ENCODE measurements at regions of chr20 and their contacts with region 1.

Region 1: GRCh38 chr20:32031007-32031958 is 20.8 kb upstream of the HCK start:
- DNase-seq: peak; percentile 67
- H3K4me3 ChIP-seq: no peak overlapping the region
- H3K27ac ChIP-seq: no peak overlapping the region
- H3K4me1 ChIP-seq: no peaks in the 10 kb centered on the region
- H3K27me3 ChIP-seq: peaks cover 3 to 12% of the 10 kb centered on the region in 2 experiments
- CTCF ChIP-seq: peak; percentile 88 to 89
- POLR2A ChIP-seq: no peak

Region 2: DNA sequence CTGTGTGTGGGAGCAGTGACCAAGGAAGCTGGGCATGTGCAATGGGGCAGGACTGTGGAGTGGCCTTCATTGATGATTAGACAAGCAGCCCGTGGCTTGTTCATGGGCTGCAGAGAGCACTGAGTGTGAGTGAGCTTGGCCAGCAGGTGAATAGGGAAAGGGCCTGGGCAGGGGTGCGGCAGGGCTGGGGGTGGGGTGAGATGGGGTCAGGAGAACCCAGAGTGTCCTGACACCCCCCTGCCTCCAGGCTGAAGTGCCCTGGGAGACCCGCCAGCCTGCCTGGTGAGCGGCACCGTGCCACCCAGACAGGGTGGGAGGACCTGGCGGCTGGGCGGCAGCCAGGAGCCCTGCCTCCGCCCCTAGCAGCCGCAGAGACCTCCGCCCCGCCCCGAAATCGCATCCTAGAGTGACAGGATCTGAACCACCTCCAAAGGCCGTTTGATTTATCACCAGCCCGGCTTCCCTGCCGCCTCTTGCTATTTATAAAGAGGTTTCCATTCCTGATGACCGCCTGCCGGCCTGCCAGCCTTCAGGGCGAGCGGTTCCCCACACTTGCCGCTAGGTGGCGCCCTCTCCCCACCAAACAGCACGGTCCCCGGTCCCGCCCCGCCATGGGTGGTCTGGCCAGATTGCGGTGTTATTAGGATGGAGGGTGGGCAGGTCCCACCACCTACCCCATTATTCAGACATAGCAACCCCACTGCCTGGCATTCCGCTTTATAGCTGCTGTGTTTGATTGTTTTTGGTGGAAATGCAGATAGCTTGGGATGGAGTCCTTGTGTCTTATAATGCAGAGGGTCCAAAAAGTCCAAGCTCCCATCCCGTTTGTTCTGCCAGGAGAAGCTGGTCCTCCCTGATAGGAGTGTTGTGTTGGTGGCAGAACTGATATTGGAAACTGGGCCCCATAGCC is 208.6 kb before region 1 on chr20:
- CTCF ChIA-PET with region 1: interaction called, 91 read pairs
- POLR2A ChIA-PET with region 1: no interaction called
- dilution Hi-C with region 1: no loop called
- intact Hi-C with region 1: loop called (anchors 1 kb)
- DNase-seq: peak; percentile 62
- H3K4me3 ChIP-seq: no peak overlapping the region
- H3K27ac ChIP-seq: peak overlapping the region; percentile 26
- H3K4me1 ChIP-seq: peaks cover 22% of the 10 kb centered on the region
- H3K27me3 ChIP-seq: no peaks in the 10 kb centered on the region
- CTCF ChIP-seq: peak; percentile 96 to 97
- POLR2A ChIP-seq: no peak

Region 3: DNA sequence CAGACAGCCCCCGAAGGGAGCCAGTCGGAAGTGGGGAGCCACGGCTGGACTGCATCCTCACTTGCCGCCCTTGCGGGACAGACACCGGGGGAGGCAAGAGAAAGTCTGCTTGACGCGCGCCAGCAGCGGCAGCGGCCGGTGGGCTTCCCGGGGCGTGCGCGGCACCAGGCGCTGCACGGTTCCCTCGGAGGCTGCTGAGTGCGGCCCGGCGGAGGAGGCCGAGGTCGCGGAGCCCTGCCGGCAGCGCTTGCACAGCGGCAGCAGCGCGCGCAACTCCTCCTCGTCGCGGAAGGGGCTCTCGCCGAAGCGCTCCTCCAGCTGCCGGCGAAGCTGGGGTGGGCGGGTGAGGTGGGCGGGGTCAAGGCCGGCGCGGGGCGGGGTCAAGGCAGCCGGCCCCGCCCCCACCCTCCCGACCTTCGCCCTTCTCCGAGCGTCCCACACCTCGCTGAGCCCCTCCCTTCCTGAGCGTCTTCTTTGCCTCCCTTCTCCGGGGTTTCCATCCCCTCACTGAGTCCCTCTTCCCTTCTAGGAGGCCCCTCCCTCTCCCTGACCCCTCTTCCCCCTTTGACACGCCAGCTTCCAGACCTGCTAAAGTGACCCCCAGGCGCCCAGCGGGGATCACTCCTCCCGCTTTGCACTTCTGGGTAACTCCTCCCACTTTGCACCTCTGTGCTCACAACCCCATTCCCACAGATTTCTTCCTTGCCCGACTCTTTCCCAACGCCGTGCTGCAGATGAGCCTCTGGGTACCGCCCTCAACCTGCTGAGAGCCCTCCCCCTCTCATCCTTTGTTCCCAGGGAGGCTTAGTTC is 169.7 kb before region 1 on chr20:
- CTCF ChIA-PET with region 1: interaction called, 243 read pairs
- POLR2A ChIA-PET with region 1: no interaction called
- dilution Hi-C with region 1: no loop called
- intact Hi-C with region 1: no loop called
- DNase-seq: peak; percentile 56
- H3K4me3 ChIP-seq: peak overlapping the region in 2 of 3 experiments; percentile 32 to 37
- H3K27ac ChIP-seq: no peak overlapping the region
- H3K4me1 ChIP-seq: no peaks in the 10 kb centered on the region
- H3K27me3 ChIP-seq: peaks cover 21 to 26% of the 10 kb centered on the region in 2 experiments
- CTCF ChIP-seq: no peak
- POLR2A ChIP-seq: no peak

Region 4: DNA sequence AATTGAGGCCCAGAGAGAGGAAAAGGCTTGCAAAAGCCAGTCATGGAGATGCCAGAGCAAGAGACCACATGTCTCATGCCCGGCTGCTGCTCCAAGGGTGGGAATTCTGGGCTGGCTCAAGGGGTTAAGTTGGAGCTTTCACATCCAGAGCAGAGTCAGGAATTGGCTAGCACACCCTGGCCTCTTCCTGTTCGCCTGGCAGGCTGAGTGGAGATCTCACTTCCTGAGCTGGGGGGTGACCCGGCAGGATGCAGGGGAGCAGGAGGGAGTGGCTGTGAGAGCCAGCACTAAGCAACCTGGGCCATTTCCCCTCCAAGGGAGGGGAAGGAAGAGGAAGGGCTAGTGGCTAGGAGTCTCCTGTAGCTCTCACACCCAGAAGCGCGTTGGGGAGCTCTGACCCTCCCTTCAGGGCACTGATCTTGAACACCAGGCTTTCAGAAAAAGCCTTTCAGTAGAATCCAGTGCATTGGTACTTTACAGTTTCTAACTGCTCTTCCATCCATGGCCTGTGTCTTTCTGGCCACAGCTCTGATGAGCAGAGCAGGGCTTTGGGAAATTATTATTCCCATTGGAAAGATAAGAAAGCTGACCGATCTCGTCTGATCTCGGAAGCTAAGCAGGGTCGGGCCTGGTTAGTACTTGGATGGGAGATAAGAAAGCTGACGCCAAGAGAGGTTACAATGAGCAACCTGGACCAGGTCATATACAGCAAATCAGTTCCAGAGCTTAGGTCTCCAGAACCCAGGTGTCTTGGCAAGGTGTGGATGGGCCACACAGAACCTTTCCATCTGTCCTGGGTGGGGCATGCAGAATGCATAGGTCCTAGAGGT is 23.3 kb before region 1 on chr20:
- CTCF ChIA-PET with region 1: interaction called, 10 read pairs
- POLR2A ChIA-PET with region 1: interaction called, 4 read pairs
- dilution Hi-C with region 1: no loop called
- intact Hi-C with region 1: loop called (anchors 1 kb)
- DNase-seq: peak; percentile 80
- H3K4me3 ChIP-seq: peak overlapping the region in 1 of 3 experiments; percentile 4
- H3K27ac ChIP-seq: peak overlapping the region; percentile 62
- H3K4me1 ChIP-seq: peaks cover 39% of the 10 kb centered on the region
- H3K27me3 ChIP-seq: no peaks in the 10 kb centered on the region
- CTCF ChIP-seq: no peak
- POLR2A ChIP-seq: peak; percentile 88

Region 5: GRCh38 chr20:32091888-32092346 is 60.6 kb after region 1 on chr20:
- CTCF ChIA-PET with region 1: interaction called, 19 read pairs
- POLR2A ChIA-PET with region 1: no interaction called
- dilution Hi-C with region 1: no loop called
- intact Hi-C with region 1: loop called (anchors 1 kb)
- DNase-seq: peak; percentile 78
- H3K4me3 ChIP-seq: no peak overlapping the region
- H3K27ac ChIP-seq: no peak overlapping the region
- H3K4me1 ChIP-seq: peaks cover 5% of the 10 kb centered on the region
- H3K27me3 ChIP-seq: peaks cover 6 to 8% of the 10 kb centered on the region in 2 experiments
- CTCF ChIP-seq: peak; percentile 92
- POLR2A ChIP-seq: no peak

Measured in endothelial cell of umbilical vein (primary cell).